Right lobe of liver (tissue), 6 donors: ENCODE measurements at regions of chr15 and their contacts with region 1.

Region 1: GRCh38 chr15:78315686-78316282 is 16.4 kb upstream of the SKIC8 start:
- DNase-seq: no peak
- ATAC-seq: no peak
- H3K4me3 ChIP-seq: no peak overlapping the region
- H3K27ac ChIP-seq: no peak overlapping the region
- H3K4me1 ChIP-seq: no peaks in the 10 kb centered on the region
- H3K27me3 ChIP-seq: no peaks in the 10 kb centered on the region
- CTCF ChIP-seq: peak in 1 of 4 donors; percentile 15
- POLR2A ChIP-seq: no peak

Region 2: DNA sequence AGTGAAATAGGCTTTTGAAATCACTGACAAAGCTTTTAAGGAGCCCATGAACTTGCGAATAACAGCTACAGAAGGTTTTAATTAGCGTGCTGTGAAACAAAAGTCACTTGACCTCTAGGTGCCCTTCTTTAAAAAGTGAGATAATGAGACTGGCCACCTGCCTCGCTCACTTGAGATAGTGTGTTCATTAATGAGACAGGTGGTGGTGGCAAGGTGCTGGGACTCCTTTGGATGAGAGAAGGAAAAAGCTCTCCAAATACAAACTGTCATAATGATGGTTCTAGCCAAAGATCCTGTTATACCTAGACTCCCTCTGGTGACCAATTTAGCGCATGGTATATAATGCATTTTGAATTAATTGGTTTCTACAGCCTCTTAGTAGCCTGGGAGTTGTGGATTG is 99.5 kb after region 1 on chr15:
- intact Hi-C with region 1: loop called (anchors 5 kb)
- DNase-seq: no peak
- ATAC-seq: peak in 3 of 4 donors; percentile 43 to 58 (median 55)
- H3K4me3 ChIP-seq: no peak overlapping the region
- H3K27ac ChIP-seq: no peak overlapping the region
- H3K4me1 ChIP-seq: no peaks in the 10 kb centered on the region
- H3K27me3 ChIP-seq: no peaks in the 10 kb centered on the region
- CTCF ChIP-seq: peak; percentile 23 to 49 (median 28)
- POLR2A ChIP-seq: no peak

Region 3: GRCh38 chr15:78422571-78423340 is 107.0 kb after region 1 on chr15:
- intact Hi-C with region 1: loop called (anchors 5 kb)
- DNase-seq: peak; percentile 62 to 71 (median 66)
- ATAC-seq: peak; percentile 92 to 96 (median 94)
- H3K4me3 ChIP-seq: no peak overlapping the region
- H3K27ac ChIP-seq: no peak overlapping the region
- H3K4me1 ChIP-seq: no peaks in the 10 kb centered on the region
- H3K27me3 ChIP-seq: no peaks in the 10 kb centered on the region
- CTCF ChIP-seq: peak; percentile 91 to 93 (median 92)
- POLR2A ChIP-seq: no peak